Activated naive CD4-positive, alpha-beta T cell treated with anti-CD3 and anti-CD28 coated beads for 36 hours (primary cell): ENCODE measurements at regions of chr14 and their contacts with region 1.

Region 1: GRCh38 chr14:24332268-24332993 is 2.4 kb downstream of the ADCY4 start:
- DNase-seq: peak; percentile 91
- H3K4me3 Mint-ChIP-seq: peak overlapping the region; percentile 71
- H3K27ac Mint-ChIP-seq: no peak overlapping the region
- H3K4me1 Mint-ChIP-seq: peaks cover 28% of the 10 kb centered on the region
- H3K27me3 Mint-ChIP-seq: peaks cover 24% of the 10 kb centered on the region

Region 2: GRCh38 chr14:23735394-23735793 is 597.0 kb before region 1 on chr14:
- CTCF ChIA-PET with region 1: no interaction called
- intact Hi-C with region 1: no loop called
- DNase-seq: no peak
- H3K4me3 Mint-ChIP-seq: no peak overlapping the region
- H3K27ac Mint-ChIP-seq: no peak overlapping the region
- H3K4me1 Mint-ChIP-seq: no peaks in the 10 kb centered on the region
- H3K27me3 Mint-ChIP-seq: no peaks in the 10 kb centered on the region

Region 3: GRCh38 chr14:24317141-24317928 is 15.1 kb before region 1 on chr14:
- CTCF ChIA-PET with region 1: interaction called, 111 read pairs
- intact Hi-C with region 1: no loop called
- DNase-seq: no peak
- H3K4me3 Mint-ChIP-seq: no peak overlapping the region
- H3K27ac Mint-ChIP-seq: no peak overlapping the region
- H3K4me1 Mint-ChIP-seq: peaks cover 45% of the 10 kb centered on the region
- H3K27me3 Mint-ChIP-seq: no peaks in the 10 kb centered on the region

Region 4: DNA sequence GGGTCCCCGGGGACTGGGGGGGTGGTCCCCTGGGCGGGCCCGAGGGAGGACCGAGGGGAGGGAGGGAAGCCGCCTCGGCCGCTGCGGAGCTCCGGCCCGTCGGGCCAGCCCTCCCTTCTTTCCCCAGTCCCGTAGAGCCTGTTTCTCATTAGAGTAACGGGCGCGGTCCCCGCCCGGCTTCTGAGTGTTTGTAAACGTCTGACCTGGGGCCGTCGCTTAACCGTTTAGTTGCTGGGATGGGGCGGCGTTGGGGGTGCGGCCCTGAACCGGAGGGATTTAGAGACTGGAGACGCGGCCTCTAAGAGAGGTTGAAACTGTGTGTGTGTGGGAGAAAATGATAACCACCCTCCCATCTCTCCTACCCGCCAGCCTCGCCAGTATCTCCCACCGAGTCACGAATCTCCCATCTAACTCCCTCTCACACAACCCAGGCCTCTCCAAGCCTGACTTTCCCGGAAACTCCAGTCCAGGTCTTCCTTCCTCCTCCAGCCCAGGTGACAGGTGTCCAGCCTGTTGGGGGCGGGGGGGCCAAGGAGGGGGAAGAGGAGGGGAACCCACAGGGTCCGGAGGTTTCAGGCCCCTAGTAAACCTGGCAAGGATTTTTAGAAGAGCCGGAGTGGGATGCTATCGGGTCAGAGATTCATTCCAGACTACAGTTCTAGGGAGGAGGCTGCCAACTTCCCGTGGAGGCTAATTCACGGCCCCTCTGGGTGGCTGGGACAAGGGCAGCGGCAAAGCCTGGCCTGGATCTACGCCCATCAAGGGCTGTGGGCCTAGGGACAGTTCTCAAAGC is 34.5 kb after region 1 on chr14:
- CTCF ChIA-PET with region 1: interaction called, 9 read pairs
- intact Hi-C with region 1: loop called (anchors 1 kb)
- DNase-seq: peak; percentile 31
- H3K4me3 Mint-ChIP-seq: peak overlapping the region; percentile 71
- H3K27ac Mint-ChIP-seq: no peak overlapping the region
- H3K4me1 Mint-ChIP-seq: peaks cover 29% of the 10 kb centered on the region
- H3K27me3 Mint-ChIP-seq: peaks cover 41% of the 10 kb centered on the region

Region 5: GRCh38 chr14:24678801-24679247 is 346.4 kb after region 1 on chr14:
- CTCF ChIA-PET with region 1: no interaction called
- intact Hi-C with region 1: loop called (anchors 2 kb)
- DNase-seq: peak; percentile 89
- H3K4me3 Mint-ChIP-seq: peak overlapping the region; percentile 70
- H3K27ac Mint-ChIP-seq: peak overlapping the region; percentile 88
- H3K4me1 Mint-ChIP-seq: peaks cover 59% of the 10 kb centered on the region
- H3K27me3 Mint-ChIP-seq: no peaks in the 10 kb centered on the region